Prostate gland (tissue), 2 donors: ENCODE measurements at regions of chr11 and their contacts with region 1.

Region 1: DNA sequence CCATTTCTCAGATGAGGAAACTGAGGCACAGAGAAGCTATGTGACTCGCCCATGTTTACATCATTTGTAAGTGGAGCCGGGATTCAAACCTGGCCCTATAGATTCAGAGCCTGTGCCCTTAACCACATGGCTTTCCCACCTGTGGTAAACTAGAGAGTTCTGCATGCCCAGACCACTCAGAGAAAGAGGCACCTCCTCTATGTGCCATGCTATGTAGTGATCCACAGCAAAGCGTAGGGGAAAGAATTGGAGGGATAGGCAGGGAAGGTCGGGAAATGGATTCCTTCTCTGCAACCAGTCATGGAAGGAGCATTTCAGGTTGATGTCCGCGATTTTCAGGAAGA is 15.4 kb upstream of the POU2AF2 start:
- DNase-seq: no peak
- H3K4me3 ChIP-seq: no peak overlapping the region
- H3K27ac ChIP-seq: no peak overlapping the region
- H3K4me1 ChIP-seq: no peaks in the 10 kb centered on the region
- H3K27me3 ChIP-seq: no peaks in the 10 kb centered on the region
- CTCF ChIP-seq: no peak
- POLR2A ChIP-seq: no peak

Region 2: GRCh38 chr11:110447897-110448745 is 782.0 kb before region 1 on chr11:
- intact Hi-C with region 1: loop called (anchors 5 kb)
- DNase-seq: no peak
- H3K4me3 ChIP-seq: no peak overlapping the region
- H3K27ac ChIP-seq: no peak overlapping the region
- H3K4me1 ChIP-seq: no peaks in the 10 kb centered on the region
- H3K27me3 ChIP-seq: no peaks in the 10 kb centered on the region
- CTCF ChIP-seq: peak; percentile 18 to 63 (median 58)
- POLR2A ChIP-seq: no peak

Region 3: GRCh38 chr11:110921742-110922521 is 308.2 kb before region 1 on chr11:
- intact Hi-C with region 1: loop called (anchors 10 kb)
- DNase-seq: peak; percentile 82
- H3K4me3 ChIP-seq: no peak overlapping the region
- H3K27ac ChIP-seq: peak overlapping the region; percentile 51
- H3K4me1 ChIP-seq: no peaks in the 10 kb centered on the region
- H3K27me3 ChIP-seq: no peaks in the 10 kb centered on the region
- CTCF ChIP-seq: no peak
- POLR2A ChIP-seq: no peak